HAP-1 (cell line): ENCODE measurements at regions of chr5 and their contacts with region 1.

Region 1: GRCh38 chr5:81851481-81852178 is 100.7 kb upstream of the SSBP2 start:
- DNase-seq: peak; percentile 88 to 96
- H3K4me3 ChIP-seq: peak overlapping the region; percentile 30
- H3K4me1 ChIP-seq: peaks cover 40% of the 10 kb centered on the region
- H3K27me3 ChIP-seq: no peaks in the 10 kb centered on the region

Region 2: DNA sequence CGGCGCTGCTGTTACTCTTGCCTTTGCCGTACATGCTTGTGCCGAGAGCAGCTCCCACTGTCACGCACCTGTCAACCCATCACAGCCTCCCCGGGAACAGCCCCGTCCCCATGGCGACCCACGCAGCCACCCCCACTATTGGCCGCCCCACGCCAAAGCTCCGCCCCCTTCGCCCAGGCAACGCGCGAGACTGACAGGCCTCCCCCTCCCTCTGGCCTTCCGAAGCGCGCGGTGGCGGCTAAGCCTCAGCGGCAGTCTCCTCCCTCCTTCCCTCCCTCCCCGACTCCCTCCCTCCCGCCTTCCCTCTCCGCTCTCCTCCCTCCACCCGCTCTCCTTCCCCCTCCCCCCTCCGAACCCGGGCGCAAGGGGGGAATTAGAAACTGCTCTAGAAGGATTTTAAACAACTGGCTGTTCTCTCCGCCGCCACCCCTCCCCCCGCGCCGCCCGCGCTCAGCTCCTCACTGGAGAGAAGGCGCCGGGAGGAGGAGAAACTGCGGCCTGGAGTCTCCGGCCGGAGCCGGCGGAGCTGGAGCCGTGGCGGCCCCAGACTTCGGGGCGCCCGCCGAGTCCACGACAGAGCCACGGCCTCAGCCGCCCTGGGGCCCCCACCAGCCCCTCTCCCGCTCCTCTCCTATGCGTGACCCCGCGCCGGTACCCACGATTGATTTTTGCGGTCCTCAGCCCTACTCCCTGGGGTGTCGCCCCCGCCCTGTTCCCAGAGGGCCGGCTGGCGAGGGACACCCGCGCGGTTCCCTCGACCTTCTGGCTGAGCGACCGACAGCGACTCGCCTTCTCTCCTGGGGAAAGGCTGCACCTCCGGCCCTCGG is 100.4 kb before region 1 on chr5 and contains the start of gene SSBP2:
- in situ Hi-C with region 1: loop called (anchors 5 kb)
- DNase-seq: peak; percentile 97 to 100
- H3K4me3 ChIP-seq: peak within 1 kb of the TSS; percentile 58
- H3K4me1 ChIP-seq: peaks cover 45% of the 10 kb centered on the region
- H3K27me3 ChIP-seq: no peaks in the 10 kb centered on the region

Region 3: GRCh38 chr5:81787474-81788242 is 64.0 kb before region 1 on chr5:
- in situ Hi-C with region 1: loop called (anchors 5 kb)
- DNase-seq: peak; percentile 81 to 82
- H3K4me3 ChIP-seq: no peak overlapping the region
- H3K4me1 ChIP-seq: peaks cover 27% of the 10 kb centered on the region
- H3K27me3 ChIP-seq: no peaks in the 10 kb centered on the region